Psoas muscle (tissue), 8 donors: ENCODE measurements at regions of chr14 and their contacts with region 1.

Region 1: GRCh38 chr14:42535397-42535796 is 928.7 kb downstream of the LRFN5 start:
- DNase-seq: no peak
- ATAC-seq: no peak
- H3K4me3 ChIP-seq: no peak overlapping the region
- H3K27ac ChIP-seq: no peak overlapping the region
- H3K4me1 ChIP-seq: no peaks in the 10 kb centered on the region
- H3K27me3 ChIP-seq: no peaks in the 10 kb centered on the region
- CTCF ChIP-seq: no peak

Region 2: GRCh38 chr14:43056104-43056503 is 520.7 kb after region 1 on chr14:
- intact Hi-C with region 1: loop called in 1 of 2 experiments (anchors 5 kb)
- DNase-seq: no peak
- ATAC-seq: no peak
- H3K4me3 ChIP-seq: no peak overlapping the region
- H3K27ac ChIP-seq: no peak overlapping the region
- H3K4me1 ChIP-seq: no peaks in the 10 kb centered on the region
- H3K27me3 ChIP-seq: no peaks in the 10 kb centered on the region
- CTCF ChIP-seq: no peak